T-cell (primary cell): ENCODE measurements at regions of chr2 and their contacts with region 1.

Region 1: DNA sequence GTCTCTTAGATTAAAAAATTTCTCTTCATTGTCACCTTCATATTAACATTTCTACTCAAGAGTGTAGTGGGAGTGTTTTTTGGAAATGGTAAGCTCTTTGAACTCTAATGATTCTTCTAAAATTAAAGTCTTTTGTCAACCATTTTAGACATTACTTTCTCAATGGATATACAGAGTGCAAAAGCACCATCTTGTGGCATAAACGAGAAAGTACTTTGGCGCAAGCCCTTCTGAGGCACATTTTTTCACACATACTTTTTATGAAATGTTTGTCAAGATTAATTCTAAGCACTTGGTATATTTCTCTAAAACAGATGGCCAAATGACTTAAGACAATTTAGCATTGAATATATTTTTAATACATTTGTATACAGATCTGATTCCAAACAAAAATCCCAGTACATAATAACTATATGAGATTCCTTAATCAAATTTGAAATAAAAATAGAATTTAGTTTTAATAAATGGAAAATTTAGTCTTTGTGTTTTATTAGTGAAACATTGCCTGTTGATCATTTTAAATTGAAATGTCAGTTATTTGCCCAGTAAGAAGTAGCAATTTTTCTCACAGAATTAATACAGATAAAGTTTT is 63.3 kb upstream of the GALNT5 start:
- DNase-seq: peak in 2 of 35 experiments; percentile 3 to 54
- ATAC-seq: peak in 1 of 4 experiments; percentile 43
- H3K4me3 ChIP-seq: no peak overlapping the region
- H3K4me3 Mint-ChIP-seq: no peak overlapping the region
- H3K27ac ChIP-seq: no peak overlapping the region
- H3K27ac Mint-ChIP-seq: no peak overlapping the region
- H3K4me1 ChIP-seq: no peaks in the 10 kb centered on the region
- H3K4me1 Mint-ChIP-seq: peaks cover 0 to 1% (median 0%) of the 10 kb centered on the region in 3 donors
- H3K27me3 ChIP-seq: no peaks in the 10 kb centered on the region
- H3K27me3 Mint-ChIP-seq: peaks cover 4 to 8% of the 10 kb centered on the region in 2 donors

Region 2: DNA sequence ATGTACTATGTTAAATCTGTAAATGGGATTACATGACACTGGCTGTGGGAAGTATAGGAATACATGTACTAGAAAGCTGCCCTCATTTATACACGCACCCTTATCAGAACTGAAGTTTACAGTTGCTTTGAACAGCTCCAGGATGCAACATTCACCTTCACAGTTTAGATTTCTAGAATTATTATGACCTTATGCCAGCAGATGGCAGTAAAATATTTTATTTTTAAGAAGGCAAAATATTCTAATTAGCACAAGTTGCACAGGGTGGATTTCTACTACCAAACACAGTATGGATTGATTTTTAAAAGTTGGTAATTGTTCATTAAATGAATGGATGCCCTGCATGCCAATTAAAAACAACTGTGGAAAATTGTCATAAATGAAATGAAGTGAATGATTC is 1825.3 kb before region 1 on chr2:
- CTCF ChIA-PET with region 1: interaction called, 3 to 13 read pairs
- POLR2A ChIA-PET with region 1: no interaction called
- DNase-seq: peak in 1 of 35 experiments; percentile 10
- ATAC-seq: no peak
- H3K4me3 ChIP-seq: no peak overlapping the region
- H3K4me3 Mint-ChIP-seq: no peak overlapping the region
- H3K27ac ChIP-seq: no peak overlapping the region
- H3K27ac Mint-ChIP-seq: no peak overlapping the region
- H3K4me1 ChIP-seq: no peaks in the 10 kb centered on the region
- H3K4me1 Mint-ChIP-seq: no peaks in the 10 kb centered on the region
- H3K27me3 ChIP-seq: no peaks in the 10 kb centered on the region
- H3K27me3 Mint-ChIP-seq: no peaks in the 10 kb centered on the region

Region 3: GRCh38 chr2:155377266-155377680 is 1816.9 kb before region 1 on chr2:
- CTCF ChIA-PET with region 1: interaction called, 5 to 10 read pairs
- POLR2A ChIA-PET with region 1: no interaction called
- DNase-seq: peak in 1 of 35 experiments; percentile 6
- ATAC-seq: no peak
- H3K4me3 ChIP-seq: no peak overlapping the region
- H3K4me3 Mint-ChIP-seq: no peak overlapping the region
- H3K27ac ChIP-seq: no peak overlapping the region
- H3K27ac Mint-ChIP-seq: no peak overlapping the region
- H3K4me1 ChIP-seq: no peaks in the 10 kb centered on the region
- H3K4me1 Mint-ChIP-seq: no peaks in the 10 kb centered on the region
- H3K27me3 ChIP-seq: no peaks in the 10 kb centered on the region
- H3K27me3 Mint-ChIP-seq: no peaks in the 10 kb centered on the region

Region 4: GRCh38 chr2:157170299-157170698 is 23.9 kb before region 1 on chr2:
- CTCF ChIA-PET with region 1: no interaction called
- POLR2A ChIA-PET with region 1: no interaction called
- DNase-seq: no peak
- ATAC-seq: no peak
- H3K4me3 ChIP-seq: no peak overlapping the region
- H3K4me3 Mint-ChIP-seq: no peak overlapping the region
- H3K27ac ChIP-seq: no peak overlapping the region
- H3K27ac Mint-ChIP-seq: no peak overlapping the region
- H3K4me1 ChIP-seq: no peaks in the 10 kb centered on the region
- H3K4me1 Mint-ChIP-seq: no peaks in the 10 kb centered on the region
- H3K27me3 ChIP-seq: peaks cover 0 to 3% of the 10 kb centered on the region in 2 experiments
- H3K27me3 Mint-ChIP-seq: peaks cover 5 to 9% of the 10 kb centered on the region in 2 donors